ENCODE measurements at regions of chr11 and their contacts with region 1.

Region 1: DNA sequence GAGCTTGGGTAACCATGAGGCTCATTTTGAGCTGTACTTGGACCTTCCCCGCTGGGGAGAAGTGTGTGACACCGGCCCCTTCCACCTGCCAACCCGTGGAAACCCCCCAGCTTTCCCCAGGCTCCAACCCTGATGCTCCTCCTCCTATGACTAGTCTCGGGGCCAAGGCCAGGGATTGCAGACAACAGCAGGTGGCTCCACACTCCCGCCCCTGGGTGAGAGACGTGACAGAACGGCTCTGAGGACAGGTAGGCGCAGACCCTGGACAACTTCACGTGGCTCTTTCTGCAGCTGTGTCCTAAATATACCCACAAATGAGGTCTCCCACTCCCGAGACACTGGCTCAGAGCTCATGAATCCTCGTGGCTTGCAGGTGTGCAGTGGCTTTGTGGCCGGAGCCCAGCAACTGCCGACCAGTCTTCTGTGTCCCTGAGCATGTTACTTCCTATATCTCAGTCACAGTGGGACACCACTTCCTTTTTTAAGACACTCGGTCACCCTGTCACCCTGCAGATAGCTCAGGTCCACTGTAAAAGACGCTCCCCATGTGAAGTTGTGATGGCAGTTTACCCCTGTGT is 55.2 kb downstream of the NECTIN1 start:
- DNase-seq: peak; percentile 87
- CTCF ChIP-seq: peak; percentile 77

Region 2: DNA sequence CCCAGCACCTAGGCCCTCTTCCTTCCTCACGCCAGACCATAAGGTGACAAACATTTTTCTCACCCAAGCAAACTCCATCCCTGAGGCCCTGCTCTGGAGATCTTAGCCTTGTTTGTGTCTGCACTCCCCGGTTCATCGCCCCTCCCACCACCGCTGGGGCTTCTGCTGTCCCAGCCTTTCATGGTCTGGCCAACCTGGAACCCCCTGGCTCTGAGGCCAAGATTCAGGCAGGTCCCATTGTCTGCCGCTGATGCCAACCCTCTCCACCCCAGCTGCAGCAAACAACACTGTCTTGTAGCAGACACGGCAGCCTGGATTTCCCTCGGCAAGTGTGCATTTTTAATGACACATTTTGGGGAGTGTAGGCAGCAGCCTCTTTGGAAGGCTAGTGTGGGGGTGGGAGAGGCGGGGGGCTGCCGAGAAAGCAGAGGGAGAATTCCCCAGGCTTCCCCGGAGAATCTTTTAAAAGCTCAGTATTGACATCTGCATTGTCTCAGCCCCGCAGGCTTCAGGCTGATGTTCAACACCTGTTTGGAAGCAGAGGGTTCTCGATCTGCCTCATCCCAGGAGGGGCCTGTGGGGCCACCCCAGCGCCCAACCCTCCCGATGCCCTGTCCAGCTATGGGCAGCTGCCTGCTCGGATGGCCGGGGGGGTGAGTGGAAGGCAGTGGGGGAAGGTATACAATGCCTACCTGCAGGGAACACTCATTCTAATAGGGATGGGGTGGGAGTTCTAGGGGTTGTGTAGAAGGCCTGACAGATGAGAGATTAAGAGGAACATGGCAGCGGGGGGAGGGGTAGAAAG is 13.6 kb after region 1 on chr11:
- CTCF ChIA-PET with region 1: interaction called, 42 read pairs
- POLR2A ChIA-PET with region 1: interaction called, 4 read pairs
- DNase-seq: no peak
- CTCF ChIP-seq: no peak

Region 3: GRCh38 chr11:119694334-119694733 is 20.5 kb after region 1 on chr11:
- CTCF ChIA-PET with region 1: interaction called, 42 read pairs
- POLR2A ChIA-PET with region 1: no interaction called
- DNase-seq: peak; percentile 50
- CTCF ChIP-seq: peak; percentile 21

Region 4: GRCh38 chr11:119721129-119722120 is 47.6 kb after region 1 on chr11:
- CTCF ChIA-PET with region 1: interaction called, 11 read pairs
- POLR2A ChIA-PET with region 1: interaction called, 3 read pairs
- DNase-seq: no peak
- CTCF ChIP-seq: peak; percentile 19

Region 5: DNA sequence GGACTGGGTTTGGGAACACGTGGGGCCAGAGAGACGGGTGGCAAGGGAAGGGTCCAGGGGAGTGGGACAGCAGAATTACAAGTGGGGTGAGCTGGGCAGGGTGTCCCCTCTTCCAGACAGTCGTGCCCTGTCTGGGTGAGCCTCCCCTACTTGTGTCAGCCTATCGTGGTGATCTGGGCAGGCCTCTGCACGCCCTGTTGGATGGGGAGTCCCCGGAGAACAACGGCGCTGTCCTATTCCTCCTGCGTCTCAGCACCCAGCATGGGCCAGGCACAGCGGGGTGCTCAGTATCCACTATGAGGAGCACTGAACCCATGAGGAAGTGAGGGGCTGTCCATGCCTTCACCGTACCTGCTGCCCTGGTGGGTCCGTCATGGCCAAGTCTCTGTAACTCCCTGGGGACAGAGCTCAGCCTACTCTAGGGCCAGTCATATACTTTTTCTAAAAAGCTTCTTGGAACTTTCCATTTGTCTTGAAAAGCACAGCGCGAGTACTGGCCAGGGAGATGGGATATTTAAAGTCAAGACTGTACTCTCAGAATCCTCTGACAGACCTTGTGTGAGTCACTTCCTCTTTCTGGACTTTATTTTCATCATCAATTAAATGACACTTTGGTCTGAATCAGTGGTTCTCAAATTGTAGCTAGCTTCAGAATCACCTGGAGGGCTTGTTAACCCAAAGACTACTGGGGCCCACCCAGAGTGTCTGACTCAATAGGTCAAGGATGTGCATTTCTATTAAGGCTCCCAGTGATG is 136.8 kb after region 1 on chr11:
- CTCF ChIA-PET with region 1: no interaction called
- POLR2A ChIA-PET with region 1: no interaction called
- DNase-seq: no peak
- CTCF ChIP-seq: no peak